ENCODE measurements at regions of chr15 and their contacts with region 1.

Region 1: GRCh38 chr15:48440084-48440483 is 108.9 kb downstream of the DUT start:
- DNase-seq: peak; percentile 74

Region 2: DNA sequence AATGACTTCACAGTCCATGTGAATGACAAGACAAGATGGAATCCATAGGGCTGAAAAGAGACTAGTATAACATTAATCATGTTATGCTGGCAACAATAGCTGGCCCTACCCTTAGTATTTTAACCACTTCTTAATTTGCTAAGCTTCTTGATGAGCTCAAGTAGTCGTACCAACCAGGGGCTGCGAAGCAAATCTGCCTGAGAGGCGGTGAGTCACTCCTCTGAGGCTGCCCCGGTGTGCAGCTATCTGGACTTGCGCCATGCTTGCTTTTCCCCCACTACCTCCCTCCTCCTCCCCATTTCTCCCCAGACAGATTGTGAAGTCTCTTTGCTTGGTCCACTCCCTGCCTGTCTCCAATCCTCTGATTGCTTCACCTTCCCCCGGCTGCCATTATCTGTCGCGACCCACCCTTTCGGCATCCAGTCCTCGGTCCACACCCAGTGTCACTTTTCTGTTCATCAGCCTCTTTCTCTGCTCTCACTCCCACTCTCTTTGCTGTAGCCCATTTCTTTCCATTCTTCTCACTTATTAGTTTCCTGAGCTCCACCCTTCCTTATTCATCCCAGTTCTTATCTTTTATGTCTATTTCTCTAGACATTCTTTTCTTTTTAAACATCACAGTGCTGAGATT is 66.1 kb before region 1 on chr15:
- intact Hi-C with region 1: loop called in 1 of 2 experiments (anchors 10 kb)
- DNase-seq: peak; percentile 85

Region 3: GRCh38 chr15:48617619-48618018 is 177.5 kb after region 1 on chr15:
- intact Hi-C with region 1: no loop called
- DNase-seq: peak; percentile 74